ENCODE measurements at regions of chr10 and their contacts with region 1.

Region 1: DNA sequence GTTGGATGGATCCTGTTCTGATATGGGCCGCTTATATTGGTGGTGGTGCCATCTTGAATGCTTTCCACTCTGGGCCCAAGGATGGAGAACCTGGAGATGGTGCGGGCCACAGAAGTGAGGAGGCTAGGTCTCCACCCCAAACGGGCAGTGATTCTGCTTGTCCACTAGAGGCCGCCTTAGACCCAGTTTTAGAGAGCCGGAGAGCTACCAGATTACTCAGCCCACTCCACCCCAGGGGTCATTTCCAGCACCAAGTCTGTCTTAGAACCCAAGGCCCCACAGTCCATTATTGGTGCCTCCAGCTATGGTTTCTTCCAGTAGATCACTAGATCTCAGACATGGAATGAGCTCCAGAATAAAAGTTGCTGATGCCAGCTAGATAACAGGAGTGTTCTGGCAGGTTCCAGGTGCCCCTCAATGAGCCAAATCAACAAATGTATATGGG is 11.8 kb upstream of the CAMK2G start:
- DNase-seq: peak; percentile 34 to 87 (median 70)

Region 2: GRCh38 chr10:74081192-74081803 is 195.2 kb after region 1 on chr10:
- intact Hi-C with region 1: loop called (anchors 5 kb)
- DNase-seq: peak in 38 of 42 donors; percentile 8 to 81 (median 50)

Region 3: GRCh38 chr10:74179111-74179710 is 293.1 kb after region 1 on chr10:
- intact Hi-C with region 1: no loop called
- DNase-seq: no peak